ENCODE measurements at regions of chr1 and their contacts with region 1.

Region 1: DNA sequence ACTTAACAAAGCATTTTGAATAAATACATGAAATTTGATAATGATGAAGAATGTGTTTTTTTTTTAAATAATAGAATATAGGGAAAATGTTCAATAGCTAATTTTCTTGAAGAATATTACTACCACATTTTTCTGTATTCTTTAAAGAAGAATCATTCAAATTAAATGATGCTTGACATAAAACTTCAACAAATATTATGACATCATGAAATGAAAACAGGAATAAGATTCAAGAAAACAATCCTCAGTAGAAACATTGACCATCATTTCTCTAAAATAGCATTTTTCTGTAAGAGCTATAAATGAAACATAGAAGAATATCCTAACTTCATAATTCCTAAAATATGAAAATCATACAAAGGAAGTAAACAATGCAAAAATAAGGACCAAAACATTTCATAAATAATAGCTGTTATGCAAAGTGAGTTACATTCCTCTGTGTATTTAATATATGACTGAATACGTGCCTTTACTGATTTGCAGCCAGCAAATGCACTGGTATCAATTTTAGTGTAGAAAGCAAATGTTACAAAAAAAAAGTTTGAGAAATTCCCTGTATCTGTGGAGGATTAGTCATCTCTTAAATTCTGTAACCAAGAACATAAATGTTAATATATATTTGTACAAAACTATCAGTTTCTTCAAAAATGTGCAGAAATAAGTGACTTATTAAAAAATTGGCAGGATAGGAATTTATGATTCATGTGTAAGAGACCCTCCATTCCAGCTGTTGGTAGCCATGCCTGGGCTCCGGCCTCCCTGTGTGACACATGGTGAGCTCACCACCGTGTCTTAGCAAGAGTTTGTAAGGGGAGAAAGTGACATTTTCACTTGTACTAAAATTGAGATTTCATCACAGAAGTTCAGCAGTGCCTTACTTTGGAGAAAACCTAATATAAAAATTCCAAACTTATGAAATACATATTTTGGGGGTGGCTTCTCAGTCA is 15.0 kb upstream of the PTPN14 start:
- DNase-seq: no peak
- ATAC-seq: peak; percentile 69; the same call in 1 of the 2 replicates
- H3K4me3 ChIP-seq: no peak overlapping the region
- H3K27ac ChIP-seq: no peak overlapping the region
- H3K4me1 ChIP-seq: peaks cover 0 to 15% of the 10 kb centered on the region in 2 experiments; a peak in 2 of 4 replicates
- H3K27me3 ChIP-seq: no peaks in the 10 kb centered on the region
- CTCF ChIP-seq: no peak
- POLR2A ChIP-seq: no peak
- RAD21 ChIP-seq: peak; percentile 3; the same call in 1 of the 2 replicates

Region 2: DNA sequence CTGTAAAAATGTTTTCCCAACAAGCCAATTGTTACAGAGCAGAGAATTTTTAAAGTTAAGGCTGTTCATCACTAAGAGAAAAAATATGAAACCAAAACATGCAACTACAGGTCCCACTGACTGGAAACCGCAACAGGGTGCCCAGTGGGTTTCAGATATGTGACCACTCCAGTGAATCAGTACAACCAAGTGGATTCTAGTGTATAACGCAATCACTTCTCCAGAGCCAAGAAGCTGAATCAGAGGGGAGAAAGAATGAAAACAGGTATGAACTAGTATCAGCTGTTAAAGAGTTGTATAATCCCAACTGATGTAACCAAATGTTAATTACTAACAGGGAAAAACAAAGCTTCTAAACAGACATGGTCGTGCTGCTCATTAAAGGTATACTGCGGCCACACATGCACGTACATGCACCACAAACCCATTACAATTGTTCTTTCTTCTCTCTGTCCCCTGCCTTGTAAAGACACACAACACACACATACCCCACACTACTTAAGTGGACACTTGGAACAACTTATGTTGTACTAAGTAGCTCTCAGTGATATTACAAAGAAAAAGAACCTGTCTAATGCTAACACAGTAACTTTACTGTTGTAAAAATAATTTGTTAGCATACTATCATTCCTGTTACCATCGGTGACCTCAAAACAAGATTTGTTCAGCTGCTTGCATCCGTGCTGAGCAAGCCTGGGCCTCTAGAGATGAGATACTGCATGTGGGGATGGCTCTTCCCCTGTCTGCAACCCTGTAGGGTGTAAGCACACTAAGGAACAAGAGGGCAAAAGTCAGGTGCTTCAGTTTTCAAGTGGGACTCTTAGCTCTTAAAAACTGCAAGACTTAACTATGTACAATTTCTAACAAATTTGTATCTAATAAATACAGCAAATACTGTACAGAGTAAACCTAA is 89.2 kb before region 1 on chr1:
- CTCF ChIA-PET with region 1: no interaction called
- POLR2A ChIA-PET with region 1: no interaction called
- RAD21 ChIA-PET with region 1: no interaction called
- intact Hi-C with region 1: no loop called
- DNase-seq: no peak
- ATAC-seq: no peak
- H3K4me3 ChIP-seq: no peak overlapping the region; a peak in 1 of 4 replicates
- H3K27ac ChIP-seq: peak overlapping the region; percentile 88
- H3K4me1 ChIP-seq: peaks cover 45 to 52% of the 10 kb centered on the region in 2 experiments
- H3K27me3 ChIP-seq: no peaks in the 10 kb centered on the region
- CTCF ChIP-seq: no peak
- POLR2A ChIP-seq: no peak
- RAD21 ChIP-seq: no peak

Region 3: GRCh38 chr1:214551436-214552173 is 14.8 kb before region 1 on chr1 and contains the start of gene PTPN14:
- CTCF ChIA-PET with region 1: no interaction called
- POLR2A ChIA-PET with region 1: interaction called, 12 read pairs
- RAD21 ChIA-PET with region 1: no interaction called
- intact Hi-C with region 1: no loop called
- DNase-seq: peak; percentile 85
- ATAC-seq: peak; percentile 83
- H3K4me3 ChIP-seq: peak within 1 kb of the TSS; percentile 80 to 93
- H3K27ac ChIP-seq: peak within 1 kb of the TSS; percentile 87
- H3K4me1 ChIP-seq: peaks cover 30 to 39% of the 10 kb centered on the region in 2 experiments
- H3K27me3 ChIP-seq: no peaks in the 10 kb centered on the region
- CTCF ChIP-seq: peak in 2 of 3 experiments; percentile 25 to 33; a peak in 3 of 6 replicates
- POLR2A ChIP-seq: no peak
- RAD21 ChIP-seq: 0 out of 2 replicates have a peak, but pooled peaks have one; percentile 19
- total RNA-seq, gene PTPN14: 37.5 TPM

Region 4: GRCh38 chr1:214632091-214632490 is 65.7 kb after region 1 on chr1:
- CTCF ChIA-PET with region 1: no interaction called
- POLR2A ChIA-PET with region 1: no interaction called
- RAD21 ChIA-PET with region 1: no interaction called
- intact Hi-C with region 1: no loop called
- DNase-seq: no peak
- ATAC-seq: no peak
- H3K4me3 ChIP-seq: no peak overlapping the region
- H3K27ac ChIP-seq: no peak overlapping the region
- H3K4me1 ChIP-seq: no peaks in the 10 kb centered on the region
- H3K27me3 ChIP-seq: no peaks in the 10 kb centered on the region
- CTCF ChIP-seq: no peak
- POLR2A ChIP-seq: no peak
- RAD21 ChIP-seq: no peak